GM12878 (cell line): ENCODE measurements at regions of chr19 and their contacts with region 1.

Region 1: GRCh38 chr19:4400135-4400936 is at the start of gene SH3GL1:
- DNase-seq: peak; percentile 48
- ATAC-seq: peak; percentile 57
- H3K4me3 ChIP-seq: peak within 1 kb of the TSS; percentile 81
- H3K27ac ChIP-seq: peak within 1 kb of the TSS; percentile 92
- H3K4me1 ChIP-seq: peaks cover 3% of the 10 kb centered on the region; the same call in 1 of the 2 replicates
- H3K27me3 ChIP-seq: no peaks in the 10 kb centered on the region
- CTCF ChIP-seq: peak; percentile 93 to 98 (median 95)
- EP300 ChIP-seq: peak in 1 of 2 experiments; percentile 10; a peak in 1 of 4 replicates
- POLR2A ChIP-seq: peak; percentile 80
- RAD21 ChIP-seq: peak; percentile 63
- polyA plus RNA-seq, gene SH3GL1: 0.93 to 3.0 TPM

Region 2: GRCh38 chr19:4342615-4343369 is 57.5 kb before region 1 on chr19:
- CTCF ChIA-PET with region 1: interaction called, 14 read pairs
- POLR2A ChIA-PET with region 1: interaction called, 18 read pairs
- RAD21 ChIA-PET with region 1: interaction called, 15 read pairs
- SMC1A ChIA-PET with region 1: interaction called, 13 read pairs
- in situ Hi-C with region 1: no loop called
- intact Hi-C with region 1: no loop called
- DNase-seq: peak; percentile 100
- ATAC-seq: peak; percentile 95
- H3K4me3 ChIP-seq: peak overlapping the region; percentile 86
- H3K27ac ChIP-seq: peak overlapping the region; percentile 82
- H3K4me1 ChIP-seq: peaks cover 12% of the 10 kb centered on the region
- H3K27me3 ChIP-seq: no peaks in the 10 kb centered on the region
- CTCF ChIP-seq: peak; percentile 9 to 18 (median 12); a peak in 2 of 6 replicates
- EP300 ChIP-seq: no peak
- POLR2A ChIP-seq: peak; percentile 92
- RAD21 ChIP-seq: no peak

Region 3: DNA sequence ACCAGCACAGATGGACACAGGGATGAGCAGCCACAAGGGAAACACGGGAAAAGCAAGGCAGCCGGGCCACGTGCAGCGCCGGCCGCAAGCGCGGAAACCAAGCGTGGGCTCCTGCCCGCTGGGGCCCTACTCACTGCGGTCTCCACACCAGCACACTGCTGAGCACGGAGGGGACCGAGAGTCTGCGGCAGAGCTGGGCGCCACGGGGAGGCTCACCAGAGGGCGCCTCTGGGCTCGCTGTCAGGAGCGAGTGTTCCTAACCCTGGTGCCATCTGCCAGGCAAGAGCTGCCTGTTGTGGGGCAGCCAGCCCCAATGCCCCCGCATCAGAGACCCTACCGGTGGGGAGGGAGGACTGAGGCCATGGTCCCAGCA is 30.5 kb before region 1 on chr19:
- CTCF ChIA-PET with region 1: interaction called, 24 read pairs
- POLR2A ChIA-PET with region 1: interaction called, 110 read pairs
- RAD21 ChIA-PET with region 1: interaction called, 13 read pairs
- SMC1A ChIA-PET with region 1: interaction called, 27 read pairs
- in situ Hi-C with region 1: no loop called
- intact Hi-C with region 1: loop called (anchors 1 kb)
- DNase-seq: no peak
- ATAC-seq: peak; percentile 83
- H3K4me3 ChIP-seq: peak overlapping the region; percentile 71
- H3K27ac ChIP-seq: peak overlapping the region; percentile 98
- H3K4me1 ChIP-seq: peaks cover 61% of the 10 kb centered on the region
- H3K27me3 ChIP-seq: no peaks in the 10 kb centered on the region
- CTCF ChIP-seq: peak; percentile 63 to 80 (median 74)
- EP300 ChIP-seq: 0 out of 4 replicates have a peak, but pooled peaks of 1 of the 2 experiments have one; percentile 22
- POLR2A ChIP-seq: no peak; the same call in none of the 2 replicates
- RAD21 ChIP-seq: peak; percentile 49; the same call in 1 of the 2 replicates

Region 4: DNA sequence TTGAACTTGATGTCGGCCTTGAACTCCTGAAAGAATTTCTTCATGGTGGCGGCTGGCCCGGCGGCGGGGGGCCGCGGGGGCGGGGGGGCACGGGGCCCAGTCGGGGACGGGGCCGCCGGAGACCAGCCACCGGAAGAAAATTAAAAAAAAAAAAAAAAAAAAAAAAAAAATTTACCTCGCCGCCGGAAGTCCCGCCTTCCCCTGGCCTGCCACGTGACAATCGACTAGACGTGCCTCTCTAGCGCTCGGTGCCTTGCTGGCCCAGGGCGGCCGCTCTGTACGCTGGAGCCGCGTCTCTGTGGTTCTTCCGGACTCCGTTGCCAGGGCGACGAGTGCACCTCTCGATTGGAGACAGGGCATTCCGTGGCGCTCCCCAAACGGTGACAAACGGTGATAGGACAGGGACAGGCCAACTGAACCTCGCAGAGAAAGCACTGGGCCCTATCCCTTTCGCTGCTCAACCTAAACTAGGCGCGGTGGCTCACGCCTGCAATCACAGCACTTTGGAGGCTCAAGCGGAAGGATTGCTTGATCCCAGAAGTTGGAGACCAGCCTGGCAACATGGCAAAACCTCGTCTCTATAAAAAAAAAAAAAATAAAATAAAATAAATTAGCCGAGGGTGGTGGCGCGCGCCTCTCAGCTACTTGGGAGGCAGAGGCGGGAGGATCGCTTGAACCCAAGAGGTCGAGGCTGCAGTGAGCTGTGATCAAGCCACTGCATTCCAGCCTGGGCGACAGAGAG is 57.5 kb after region 1 on chr19 and contains the start of gene UBXN6:
- CTCF ChIA-PET with region 1: no interaction called
- POLR2A ChIA-PET with region 1: interaction called, 5 read pairs
- RAD21 ChIA-PET with region 1: interaction called, 4 read pairs
- SMC1A ChIA-PET with region 1: no interaction called
- in situ Hi-C with region 1: no loop called
- intact Hi-C with region 1: loop called (anchors 1 kb)
- DNase-seq: peak; percentile 86
- ATAC-seq: peak; percentile 90
- H3K4me3 ChIP-seq: peak within 1 kb of the TSS; percentile 85
- H3K27ac ChIP-seq: peak within 1 kb of the TSS; percentile 61; the same call in 1 of the 2 replicates
- H3K4me1 ChIP-seq: no peaks in the 10 kb centered on the region
- H3K27me3 ChIP-seq: no peaks in the 10 kb centered on the region
- CTCF ChIP-seq: no peak
- EP300 ChIP-seq: no peak
- POLR2A ChIP-seq: peak; percentile 40; the same call in 1 of the 2 replicates
- RAD21 ChIP-seq: no peak
- polyA plus RNA-seq, gene UBXN6: 0.47 to 2.1 TPM